CD8-positive, alpha-beta T cell (primary cell): ENCODE measurements at regions of chr4 and their contacts with region 1.

Region 1: DNA sequence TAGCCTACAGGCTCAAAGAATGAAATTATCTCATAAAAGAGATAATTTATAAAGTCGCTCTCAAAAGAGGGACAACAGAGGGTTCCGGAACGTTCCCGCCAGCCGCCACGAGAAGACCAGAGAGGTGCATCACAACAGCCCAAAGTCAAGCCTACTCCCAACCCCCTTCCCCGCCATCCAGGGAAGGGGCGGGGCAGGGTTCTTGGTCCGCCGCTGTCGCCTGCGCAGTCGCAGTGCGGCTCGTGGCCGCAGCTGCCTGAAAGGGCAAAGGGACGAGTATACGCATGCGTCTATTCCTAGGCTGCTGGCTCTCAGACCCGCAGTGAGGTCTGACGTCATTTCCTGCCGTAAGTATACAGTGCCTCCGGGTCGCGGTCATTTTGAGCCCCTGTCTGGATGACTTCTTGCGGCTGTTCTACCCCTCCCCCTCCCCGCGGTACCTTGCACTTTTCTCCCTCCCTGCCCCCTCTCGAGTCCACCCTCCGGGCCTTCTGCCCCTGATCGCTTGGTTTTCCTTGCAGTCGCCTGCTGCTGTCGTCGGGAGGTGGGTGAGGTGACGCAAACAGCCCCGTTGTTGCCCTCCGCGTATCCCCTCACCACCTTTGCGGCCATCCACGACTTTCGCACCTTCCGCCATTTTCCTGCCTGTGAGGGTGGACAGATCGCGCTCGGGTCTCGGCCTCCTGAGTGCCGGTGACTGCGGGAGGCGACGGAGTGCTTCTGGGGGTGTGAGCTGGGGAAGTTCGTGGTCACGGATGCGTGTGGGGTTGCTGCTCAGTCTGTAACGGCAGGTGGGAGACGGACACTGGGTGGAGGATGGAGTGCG is at the start of gene OCIAD1:
- DNase-seq: peak; percentile 86 to 100 (median 91)
- ATAC-seq: peak; percentile 92
- H3K4me3 ChIP-seq: peak within 1 kb of the TSS; percentile 95 to 98
- H3K4me3 Mint-ChIP-seq: peak within 1 kb of the TSS; percentile 99
- H3K27ac ChIP-seq: peak within 1 kb of the TSS; percentile 97 to 98
- H3K27ac Mint-ChIP-seq: peak within 1 kb of the TSS; percentile 100
- H3K4me1 ChIP-seq: peaks cover 24% of the 10 kb centered on the region
- H3K4me1 Mint-ChIP-seq: peaks cover 25% of the 10 kb centered on the region
- H3K27me3 ChIP-seq: no peaks in the 10 kb centered on the region
- H3K27me3 Mint-ChIP-seq: no peaks in the 10 kb centered on the region
- CTCF ChIP-seq: no peak
- total RNA-seq, gene OCIAD1: 80.0 to 83.7 TPM

Region 2: GRCh38 chr4:47463235-47463956 is 1367.5 kb before region 1 on chr4 and contains the start of gene COMMD8:
- CTCF ChIA-PET with region 1: no interaction called
- POLR2A ChIA-PET with region 1: no interaction called
- intact Hi-C with region 1: loop called in 1 of 2 experiments (anchors 5 kb)
- DNase-seq: peak; percentile 95 to 99 (median 97)
- ATAC-seq: peak; percentile 86
- H3K4me3 ChIP-seq: peak within 1 kb of the TSS; percentile 71 to 85
- H3K4me3 Mint-ChIP-seq: peak within 1 kb of the TSS; percentile 88
- H3K27ac ChIP-seq: peak within 1 kb of the TSS; percentile 73 to 81
- H3K27ac Mint-ChIP-seq: peak within 1 kb of the TSS; percentile 86
- H3K4me1 ChIP-seq: peaks cover 12% of the 10 kb centered on the region
- H3K4me1 Mint-ChIP-seq: peaks cover 43% of the 10 kb centered on the region
- H3K27me3 ChIP-seq: no peaks in the 10 kb centered on the region
- H3K27me3 Mint-ChIP-seq: peaks cover 2% of the 10 kb centered on the region
- CTCF ChIP-seq: no peak
- total RNA-seq, gene COMMD8: 4.6 to 6.3 TPM

Region 3: GRCh38 chr4:48109413-48110263 is 721.3 kb before region 1 on chr4:
- CTCF ChIA-PET with region 1: no interaction called
- POLR2A ChIA-PET with region 1: no interaction called
- intact Hi-C with region 1: loop called in 1 of 2 experiments (anchors 10 kb)
- DNase-seq: peak in 3 of 9 experiments; percentile 29 to 74 (median 65)
- ATAC-seq: peak; percentile 82
- H3K4me3 ChIP-seq: no peak overlapping the region
- H3K4me3 Mint-ChIP-seq: no peak overlapping the region
- H3K27ac ChIP-seq: no peak overlapping the region
- H3K27ac Mint-ChIP-seq: peak overlapping the region; percentile 75
- H3K4me1 ChIP-seq: peaks cover 34% of the 10 kb centered on the region
- H3K4me1 Mint-ChIP-seq: peaks cover 56% of the 10 kb centered on the region
- H3K27me3 ChIP-seq: no peaks in the 10 kb centered on the region
- H3K27me3 Mint-ChIP-seq: no peaks in the 10 kb centered on the region
- CTCF ChIP-seq: peak; percentile 67

Region 4: DNA sequence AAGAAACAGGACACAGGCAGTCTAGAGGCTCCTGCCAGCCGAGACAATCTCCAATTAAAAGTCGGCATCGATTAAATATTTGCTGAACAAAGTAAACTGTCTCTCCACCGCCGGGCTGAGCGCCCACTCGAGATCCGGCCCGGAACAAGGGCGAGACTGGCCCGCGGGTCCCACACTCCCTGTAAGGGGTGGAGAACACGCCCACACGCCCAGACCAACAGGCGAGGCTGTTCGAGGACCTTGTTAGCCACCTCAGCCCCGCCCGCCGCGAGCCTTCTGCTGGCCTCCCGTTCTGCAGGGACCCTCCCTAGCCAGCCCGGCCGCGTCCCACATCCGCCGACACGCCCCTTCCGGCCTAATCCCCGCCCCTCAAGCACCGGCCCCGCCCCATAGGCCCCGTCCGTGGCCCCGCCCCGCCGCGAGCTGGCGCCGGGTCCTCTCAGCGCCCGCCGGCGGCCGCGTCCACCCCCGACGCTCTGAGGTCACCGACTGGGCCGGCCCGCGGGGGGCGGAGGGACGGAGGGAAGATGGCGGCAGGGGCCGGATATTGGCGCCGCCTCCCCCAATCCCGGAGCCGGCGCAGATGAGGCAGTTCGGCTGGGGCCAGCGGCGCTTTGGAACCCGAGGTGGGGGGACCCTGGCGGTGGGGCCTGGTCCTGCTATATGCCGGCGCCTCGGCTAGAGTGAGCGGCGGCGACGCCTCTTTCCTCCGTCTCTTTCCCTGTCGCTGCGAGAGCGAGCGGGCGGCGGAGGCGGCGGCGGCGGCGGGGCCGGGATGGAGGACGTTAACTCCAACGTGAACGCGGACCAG is 489.7 kb before region 1 on chr4 and contains the start of gene SLAIN2:
- CTCF ChIA-PET with region 1: no interaction called
- POLR2A ChIA-PET with region 1: no interaction called
- intact Hi-C with region 1: loop called (anchors 2 to 10 kb)
- DNase-seq: peak; percentile 95 to 100 (median 98)
- ATAC-seq: peak; percentile 84
- H3K4me3 ChIP-seq: peak within 1 kb of the TSS; percentile 80 to 93
- H3K4me3 Mint-ChIP-seq: peak within 1 kb of the TSS; percentile 99
- H3K27ac ChIP-seq: peak within 1 kb of the TSS; percentile 91 to 95
- H3K27ac Mint-ChIP-seq: peak within 1 kb of the TSS; percentile 99
- H3K4me1 ChIP-seq: peaks cover 34% of the 10 kb centered on the region
- H3K4me1 Mint-ChIP-seq: peaks cover 49% of the 10 kb centered on the region
- H3K27me3 ChIP-seq: no peaks in the 10 kb centered on the region
- H3K27me3 Mint-ChIP-seq: no peaks in the 10 kb centered on the region
- CTCF ChIP-seq: peak; percentile 46
- total RNA-seq, gene SLAIN2: 62.4 to 76.5 TPM

Region 5: DNA sequence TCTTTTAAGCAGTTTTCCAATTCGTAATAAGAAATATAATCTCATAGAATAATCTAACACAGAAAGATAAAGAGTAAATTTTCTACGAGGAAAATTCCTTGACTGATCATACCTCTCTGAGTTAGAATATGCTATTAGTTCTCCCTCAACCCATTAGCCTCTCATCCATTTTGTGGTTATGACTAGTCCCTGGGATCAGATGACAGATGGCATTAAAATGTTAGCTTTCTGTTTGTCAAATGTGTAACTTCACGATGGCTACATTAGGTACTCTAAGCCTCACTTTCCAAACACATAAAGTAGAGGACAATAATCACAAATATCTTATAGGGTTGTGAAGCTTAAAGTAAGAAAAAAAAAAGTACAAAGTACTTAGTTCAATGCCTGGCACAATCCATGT is 228.7 kb before region 1 on chr4:
- CTCF ChIA-PET with region 1: no interaction called
- POLR2A ChIA-PET with region 1: no interaction called
- intact Hi-C with region 1: loop called in 1 of 2 experiments (anchors 10 kb)
- DNase-seq: no peak
- ATAC-seq: no peak
- H3K4me3 ChIP-seq: no peak overlapping the region
- H3K4me3 Mint-ChIP-seq: no peak overlapping the region
- H3K27ac ChIP-seq: no peak overlapping the region
- H3K27ac Mint-ChIP-seq: no peak overlapping the region
- H3K4me1 ChIP-seq: no peaks in the 10 kb centered on the region
- H3K4me1 Mint-ChIP-seq: no peaks in the 10 kb centered on the region
- H3K27me3 ChIP-seq: no peaks in the 10 kb centered on the region
- H3K27me3 Mint-ChIP-seq: no peaks in the 10 kb centered on the region
- CTCF ChIP-seq: no peak

Region 6: DNA sequence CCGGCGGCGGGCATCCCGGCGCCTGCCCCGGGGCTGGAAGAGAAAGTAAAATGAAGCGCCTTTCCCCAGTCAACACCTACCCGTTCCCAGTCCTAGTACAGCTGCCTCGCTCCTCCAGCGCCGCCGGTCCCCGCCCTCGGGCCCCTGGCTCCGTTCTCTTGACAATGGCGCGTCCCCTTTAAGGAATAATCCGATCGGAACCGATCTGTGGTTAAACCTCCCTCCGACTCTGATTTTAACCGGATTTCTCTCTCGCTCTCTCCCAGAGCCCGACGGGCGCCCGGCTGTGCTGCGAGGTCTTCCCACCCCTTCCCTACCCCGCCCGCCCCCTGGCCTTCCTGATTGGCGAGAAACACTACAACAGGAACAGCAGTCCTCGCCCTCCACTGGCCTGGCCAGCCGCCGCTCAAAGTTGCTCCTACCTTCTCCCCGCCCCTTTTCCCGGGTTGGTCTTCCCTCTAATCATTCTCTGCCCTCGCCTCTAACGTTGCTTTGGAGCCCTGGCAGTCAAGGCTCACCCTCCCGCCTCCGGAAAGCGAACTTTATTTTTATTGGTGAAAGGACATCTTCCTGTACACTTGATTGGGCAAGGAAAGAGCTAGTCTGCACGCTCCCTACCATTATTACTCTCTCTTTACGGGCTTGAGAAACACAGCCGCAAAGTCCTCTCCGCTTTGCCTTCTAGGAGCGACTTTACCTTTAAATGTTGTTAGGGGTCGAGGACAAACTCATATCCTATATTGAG is 50.7 kb before region 1 on chr4 and contains the start of gene FRYL:
- CTCF ChIA-PET with region 1: interaction called, 3 read pairs
- POLR2A ChIA-PET with region 1: interaction called, 13 read pairs
- intact Hi-C with region 1: loop called (anchors 1 kb)
- DNase-seq: peak; percentile 94 to 99 (median 96)
- ATAC-seq: peak; percentile 85
- H3K4me3 ChIP-seq: peak within 1 kb of the TSS; percentile 57 to 80
- H3K4me3 Mint-ChIP-seq: peak within 1 kb of the TSS; percentile 91
- H3K27ac ChIP-seq: peak within 1 kb of the TSS; percentile 73 to 84
- H3K27ac Mint-ChIP-seq: peak within 1 kb of the TSS; percentile 93
- H3K4me1 ChIP-seq: peaks cover 35% of the 10 kb centered on the region
- H3K4me1 Mint-ChIP-seq: peaks cover 47% of the 10 kb centered on the region
- H3K27me3 ChIP-seq: no peaks in the 10 kb centered on the region
- H3K27me3 Mint-ChIP-seq: no peaks in the 10 kb centered on the region
- CTCF ChIP-seq: no peak
- total RNA-seq, gene FRYL: 62.9 to 66.7 TPM

Region 7: DNA sequence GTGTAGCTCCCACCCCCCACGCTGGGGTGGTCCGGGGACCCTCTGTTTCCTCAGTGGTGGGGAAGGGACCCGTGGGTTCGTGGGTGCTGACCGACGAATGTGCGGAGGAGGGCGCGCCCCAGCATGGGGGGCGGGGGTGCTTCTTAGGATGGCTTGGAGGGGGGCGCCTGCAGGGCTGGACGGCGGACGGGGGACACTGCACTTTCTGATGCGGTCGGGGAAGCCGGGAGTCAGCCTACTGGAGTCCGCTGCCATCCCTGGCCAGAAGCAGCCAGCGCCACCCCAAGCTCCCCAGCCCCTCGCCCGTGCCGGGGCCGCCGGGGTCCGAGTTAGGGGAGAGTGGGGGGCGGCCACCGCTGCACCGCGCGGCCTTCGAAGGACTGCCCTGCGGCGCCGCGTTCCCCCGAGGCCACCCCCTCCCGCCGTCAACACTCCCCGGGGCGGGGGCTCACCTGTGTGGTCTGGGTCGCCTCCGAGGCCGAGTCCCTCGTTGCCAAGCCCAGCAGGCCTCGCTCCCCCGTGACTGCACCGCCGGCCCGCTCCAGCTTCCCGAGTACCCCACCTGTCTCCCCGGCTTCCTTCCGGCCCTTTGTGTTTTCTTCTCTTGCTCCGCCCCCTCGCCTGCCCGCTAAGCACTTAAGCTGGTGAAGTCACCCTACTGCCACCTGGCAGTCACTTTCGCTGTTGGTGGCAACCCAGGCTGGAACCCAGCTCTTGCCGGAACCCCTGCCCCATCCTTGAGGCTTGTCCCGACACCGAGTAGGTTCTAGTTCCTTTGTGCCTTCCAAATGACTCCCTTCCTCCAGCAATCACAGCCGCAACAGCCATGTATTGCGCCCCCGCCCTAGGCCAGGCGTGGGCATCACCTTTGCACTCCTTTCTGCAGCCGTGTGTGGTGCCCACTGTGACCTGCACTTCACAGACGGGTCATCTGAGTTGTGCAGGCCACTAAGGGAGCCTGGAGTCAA is 75.6 kb after region 1 on chr4 and contains the start of gene OCIAD2:
- CTCF ChIA-PET with region 1: interaction called, 4 read pairs
- POLR2A ChIA-PET with region 1: interaction called, 4 read pairs
- intact Hi-C with region 1: loop called (anchors 1 to 2 kb)
- DNase-seq: peak; percentile 70 to 92 (median 89)
- ATAC-seq: peak; percentile 97
- H3K4me3 ChIP-seq: peak within 1 kb of the TSS; percentile 73 to 82
- H3K4me3 Mint-ChIP-seq: peak within 1 kb of the TSS; percentile 98
- H3K27ac ChIP-seq: peak within 1 kb of the TSS; percentile 64 to 71
- H3K27ac Mint-ChIP-seq: peak within 1 kb of the TSS; percentile 98
- H3K4me1 ChIP-seq: peaks cover 29% of the 10 kb centered on the region
- H3K4me1 Mint-ChIP-seq: peaks cover 49% of the 10 kb centered on the region
- H3K27me3 ChIP-seq: no peaks in the 10 kb centered on the region
- H3K27me3 Mint-ChIP-seq: no peaks in the 10 kb centered on the region
- CTCF ChIP-seq: peak; percentile 36
- total RNA-seq, gene OCIAD2: 70.6 to 72.1 TPM